ENCODE measurements at regions of chr20 and their contacts with region 1.

Region 1: GRCh38 chr20:50750145-50750671 is 18.8 kb downstream of the PARD6B start:
- DNase-seq: peak; percentile 19
- ATAC-seq: no peak
- H3K4me3 Mint-ChIP-seq: no peak overlapping the region
- H3K27ac Mint-ChIP-seq: no peak overlapping the region
- H3K4me1 Mint-ChIP-seq: peaks cover 25% of the 10 kb centered on the region
- H3K27me3 Mint-ChIP-seq: no peaks in the 10 kb centered on the region

Region 2: DNA sequence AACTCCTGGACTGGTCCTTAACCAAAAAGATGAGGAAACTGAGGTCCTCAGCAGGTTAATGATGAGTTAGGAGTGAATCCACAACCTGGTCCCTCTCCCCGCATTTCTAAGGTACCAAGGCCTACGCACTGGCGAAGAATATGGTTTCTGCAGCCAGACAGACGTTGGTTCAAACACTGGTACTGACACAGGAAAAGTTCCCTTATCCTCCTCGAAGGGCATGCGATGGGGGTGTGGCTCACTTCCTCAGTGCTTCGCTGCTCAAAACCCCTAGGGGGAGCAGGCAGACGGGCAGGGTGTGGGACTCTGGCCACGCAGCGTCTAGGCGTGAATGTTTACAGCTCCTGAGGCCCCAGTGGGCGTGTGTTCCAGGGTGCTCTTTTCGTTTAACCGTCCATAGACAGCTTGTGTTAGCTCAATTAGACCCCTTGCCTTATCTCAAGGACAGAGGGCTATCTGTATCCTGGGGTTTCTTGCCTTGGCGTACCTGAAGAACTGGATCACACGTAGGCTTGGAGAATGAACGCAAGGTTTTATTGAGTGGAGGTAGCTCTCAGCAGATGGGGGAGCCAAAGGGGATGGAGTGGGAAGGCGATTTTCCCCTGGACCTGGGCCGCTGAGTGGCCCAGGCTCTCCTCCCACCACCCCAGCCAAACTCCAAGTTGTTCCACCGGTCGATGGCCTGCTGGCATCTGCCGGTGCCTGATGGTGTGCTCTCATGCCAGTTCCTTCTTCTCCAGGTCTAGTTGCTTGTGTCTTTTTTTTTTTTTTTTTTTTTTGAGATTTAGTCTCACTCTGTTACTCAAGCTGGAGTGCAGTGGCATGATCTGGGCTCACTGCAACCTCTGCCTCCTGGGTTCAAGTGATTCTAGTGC is 271.8 kb before region 1 on chr20:
- CTCF ChIA-PET with region 1: no interaction called
- DNase-seq: peak; percentile 88
- ATAC-seq: peak; percentile 100
- H3K4me3 Mint-ChIP-seq: no peak overlapping the region
- H3K27ac Mint-ChIP-seq: peak overlapping the region; percentile 49
- H3K4me1 Mint-ChIP-seq: peaks cover 54% of the 10 kb centered on the region
- H3K27me3 Mint-ChIP-seq: no peaks in the 10 kb centered on the region

Region 3: DNA sequence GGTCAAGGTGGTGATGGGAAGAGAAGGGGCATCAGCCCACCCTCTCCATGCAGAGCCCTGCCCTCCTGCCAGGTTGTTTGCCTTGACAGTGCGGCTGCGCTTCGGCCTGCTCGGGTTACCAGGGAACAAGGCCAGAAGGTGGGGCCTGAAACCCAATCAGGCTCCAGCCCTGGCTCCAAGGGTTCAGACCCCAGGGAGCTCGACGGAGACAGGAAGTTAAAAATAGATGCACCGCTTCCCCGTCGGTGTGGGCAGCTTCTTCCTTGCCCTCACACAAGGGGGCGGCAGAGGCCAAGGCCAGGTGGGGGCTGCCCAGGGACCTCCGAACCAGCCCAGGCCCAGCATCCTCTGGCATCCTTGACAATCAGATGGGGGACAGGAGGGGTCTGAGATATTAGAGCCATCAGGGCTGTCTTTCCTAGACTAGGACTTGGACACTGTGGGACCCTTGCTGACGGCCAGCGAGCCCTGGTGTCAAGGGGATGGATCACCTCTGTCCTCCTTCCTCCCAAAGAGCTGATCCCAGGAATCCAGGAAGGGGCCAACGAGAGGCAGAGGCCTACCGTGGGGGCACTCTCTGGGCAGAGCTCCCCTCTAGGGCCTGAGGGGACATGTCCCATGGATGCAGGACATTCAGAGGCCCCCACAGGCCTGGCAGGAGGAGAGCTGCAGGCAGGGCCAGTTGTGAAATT is 124.1 kb before region 1 on chr20:
- CTCF ChIA-PET with region 1: interaction called, 18 read pairs
- DNase-seq: peak; percentile 47
- ATAC-seq: peak; percentile 61
- H3K4me3 Mint-ChIP-seq: no peak overlapping the region
- H3K27ac Mint-ChIP-seq: no peak overlapping the region
- H3K4me1 Mint-ChIP-seq: no peaks in the 10 kb centered on the region
- H3K27me3 Mint-ChIP-seq: no peaks in the 10 kb centered on the region

Region 4: DNA sequence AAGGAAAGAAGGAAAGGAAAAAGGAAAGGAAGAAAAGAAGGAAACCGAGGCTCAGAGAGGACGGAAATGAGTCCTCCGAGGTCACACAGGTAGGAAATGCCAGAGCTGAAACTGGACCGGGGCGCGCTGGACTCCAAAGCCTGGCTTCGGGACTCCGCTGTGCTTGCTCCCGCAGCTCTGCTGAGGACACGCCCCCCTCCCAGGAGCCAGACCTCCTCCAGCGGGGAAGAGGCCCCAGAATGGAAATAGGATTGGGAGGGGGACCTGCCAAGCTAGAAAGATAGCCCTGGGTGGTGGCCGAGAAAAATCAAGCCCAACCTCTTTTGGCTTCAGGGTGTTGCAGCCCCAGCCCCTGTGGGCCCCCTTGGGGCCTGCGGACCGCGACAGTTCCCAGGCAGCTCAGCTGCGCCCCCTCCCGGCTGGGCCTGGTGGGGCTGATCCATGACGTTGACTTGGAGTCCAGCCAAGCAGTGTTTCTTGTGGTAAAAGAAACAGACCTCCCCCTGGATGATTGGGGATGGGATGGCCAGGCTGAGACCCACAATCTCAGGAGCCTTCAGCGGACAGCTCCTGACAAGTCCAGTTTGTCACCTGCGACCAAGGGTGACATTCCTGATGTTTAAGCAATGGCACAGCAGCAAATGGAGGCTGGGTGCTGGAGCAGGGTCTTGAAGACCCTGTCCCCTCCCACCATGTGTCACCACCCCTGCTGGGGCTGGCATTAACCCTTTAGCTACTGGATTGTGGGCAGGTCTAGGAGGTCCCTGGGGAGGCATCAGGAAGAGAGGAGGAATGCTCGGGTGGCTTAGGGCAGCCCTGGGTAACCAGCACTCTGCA is 114.3 kb before region 1 on chr20:
- CTCF ChIA-PET with region 1: interaction called, 11 read pairs
- DNase-seq: peak; percentile 68
- ATAC-seq: peak; percentile 83
- H3K4me3 Mint-ChIP-seq: no peak overlapping the region
- H3K27ac Mint-ChIP-seq: no peak overlapping the region
- H3K4me1 Mint-ChIP-seq: no peaks in the 10 kb centered on the region
- H3K27me3 Mint-ChIP-seq: no peaks in the 10 kb centered on the region

Region 5: DNA sequence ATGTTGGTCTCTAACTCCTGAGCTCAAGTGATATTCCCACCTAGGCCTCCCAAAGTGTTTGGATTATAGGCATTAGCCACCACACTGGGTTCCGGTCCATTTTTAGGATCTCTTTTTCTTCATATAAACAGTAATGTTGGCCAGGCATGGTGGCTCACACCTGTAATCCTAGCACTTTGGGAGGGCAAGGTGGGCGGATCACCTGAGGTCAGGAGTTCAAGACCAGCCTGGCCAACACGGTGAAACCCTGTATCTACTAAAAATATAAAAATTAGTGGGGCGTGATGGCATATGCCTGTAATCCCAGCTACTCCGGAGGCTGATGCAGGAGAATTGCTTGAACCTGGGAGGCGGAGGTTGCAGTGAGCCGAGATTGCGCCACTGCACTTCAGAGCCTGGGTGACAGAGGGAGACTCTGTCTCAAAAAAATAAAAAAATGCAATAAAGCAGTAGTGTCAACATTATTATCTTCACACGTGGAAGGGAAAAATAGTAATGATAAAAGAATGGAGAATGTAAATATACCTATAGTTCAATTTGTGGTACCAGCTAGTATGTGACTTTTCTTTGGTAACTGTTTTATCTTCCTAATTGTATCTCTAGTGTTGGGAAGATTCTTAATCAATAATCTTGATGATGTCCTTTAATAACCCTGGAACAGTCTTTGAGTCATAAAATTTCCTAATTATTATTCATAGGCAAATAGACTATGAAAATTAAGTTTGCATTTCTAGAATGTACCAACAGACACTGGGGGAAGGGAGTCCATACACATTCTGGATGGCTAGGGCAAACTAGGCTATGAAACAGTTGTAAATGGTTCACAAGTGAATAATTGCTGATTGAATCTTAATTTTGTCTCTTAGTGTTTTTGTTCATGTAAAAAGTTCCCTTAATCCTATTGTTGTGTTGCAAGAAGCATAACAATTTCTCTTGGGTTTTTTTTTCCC is 15.2 kb before region 1 on chr20:
- CTCF ChIA-PET with region 1: interaction called, 11 read pairs
- DNase-seq: no peak
- ATAC-seq: no peak
- H3K4me3 Mint-ChIP-seq: no peak overlapping the region
- H3K27ac Mint-ChIP-seq: no peak overlapping the region
- H3K4me1 Mint-ChIP-seq: peaks cover 31% of the 10 kb centered on the region
- H3K27me3 Mint-ChIP-seq: no peaks in the 10 kb centered on the region

Region 6: DNA sequence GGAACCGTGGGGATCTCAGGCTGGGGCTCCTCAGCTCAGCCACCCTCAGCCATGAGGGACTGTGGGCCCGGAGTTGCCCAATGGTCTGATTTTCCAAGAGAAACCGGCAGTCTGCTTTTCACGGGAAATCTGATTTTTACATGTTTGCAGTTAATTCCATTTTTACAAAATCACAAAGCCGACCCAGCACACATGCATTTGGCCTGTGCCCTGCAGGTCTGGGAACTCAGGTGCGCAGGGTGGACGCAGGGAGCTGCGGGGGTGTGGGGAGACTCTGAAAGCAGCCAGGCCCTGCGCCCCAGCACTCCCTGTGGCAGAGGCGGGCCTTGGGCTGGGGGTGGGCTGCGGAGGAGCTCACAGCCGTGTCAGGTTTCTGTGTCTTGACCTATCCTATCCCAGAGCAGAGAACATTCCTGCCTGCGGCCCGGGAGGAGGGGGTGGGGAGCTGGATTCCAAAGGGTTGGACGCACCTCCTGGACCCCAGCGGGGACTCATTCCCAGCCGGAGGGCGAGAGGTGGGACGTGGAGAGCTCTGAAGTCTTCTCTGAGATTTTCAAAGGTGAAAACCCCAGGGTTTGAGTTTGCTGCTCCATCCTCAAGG is 120.5 kb after region 1 on chr20:
- CTCF ChIA-PET with region 1: no interaction called
- DNase-seq: no peak
- ATAC-seq: no peak
- H3K4me3 Mint-ChIP-seq: no peak overlapping the region
- H3K27ac Mint-ChIP-seq: no peak overlapping the region
- H3K4me1 Mint-ChIP-seq: no peaks in the 10 kb centered on the region
- H3K27me3 Mint-ChIP-seq: no peaks in the 10 kb centered on the region

Region 7: DNA sequence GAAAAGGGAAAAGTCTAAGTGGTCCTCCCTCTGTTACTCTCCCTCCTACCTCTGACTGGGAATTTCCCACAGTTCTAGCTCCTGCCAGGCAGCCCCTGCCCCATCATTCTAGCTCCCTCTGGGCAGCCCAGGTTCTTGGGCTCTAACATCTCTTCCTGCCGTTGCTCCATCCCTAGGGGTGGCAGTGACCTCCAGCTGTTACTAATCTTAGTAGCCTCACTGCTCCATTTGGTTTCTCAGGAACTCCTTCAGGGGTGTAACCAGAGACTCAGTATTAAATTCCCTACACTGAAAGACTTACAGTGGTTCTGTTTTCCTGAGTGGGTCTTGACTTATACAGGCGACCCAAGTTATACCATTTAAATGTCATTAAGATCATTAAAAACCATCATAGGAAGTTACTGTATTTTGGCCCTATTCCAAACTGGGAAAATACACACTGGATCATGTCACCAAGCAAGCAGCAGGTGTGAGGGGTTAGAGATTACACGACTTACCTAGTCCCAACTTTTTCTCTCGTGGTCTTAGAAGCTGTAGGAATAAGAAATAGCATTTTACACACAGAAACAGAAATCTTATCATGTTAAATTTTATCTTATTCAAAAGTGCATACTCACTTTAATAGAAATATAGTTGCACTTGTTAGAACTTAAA is 198.1 kb after region 1 on chr20:
- CTCF ChIA-PET with region 1: no interaction called
- DNase-seq: no peak
- ATAC-seq: no peak
- H3K4me3 Mint-ChIP-seq: no peak overlapping the region
- H3K27ac Mint-ChIP-seq: no peak overlapping the region
- H3K4me1 Mint-ChIP-seq: peaks cover 7% of the 10 kb centered on the region
- H3K27me3 Mint-ChIP-seq: no peaks in the 10 kb centered on the region

Region 8: GRCh38 chr20:51366155-51366886 is 616.1 kb after region 1 on chr20:
- CTCF ChIA-PET with region 1: no interaction called
- DNase-seq: no peak
- ATAC-seq: no peak
- H3K4me3 Mint-ChIP-seq: no peak overlapping the region
- H3K27ac Mint-ChIP-seq: no peak overlapping the region
- H3K4me1 Mint-ChIP-seq: peaks cover 18% of the 10 kb centered on the region
- H3K27me3 Mint-ChIP-seq: peaks cover 6% of the 10 kb centered on the region